Gastrocnemius medialis (tissue), 4 donors: ENCODE measurements at regions of chr1 and their contacts with region 1.

Region 1: DNA sequence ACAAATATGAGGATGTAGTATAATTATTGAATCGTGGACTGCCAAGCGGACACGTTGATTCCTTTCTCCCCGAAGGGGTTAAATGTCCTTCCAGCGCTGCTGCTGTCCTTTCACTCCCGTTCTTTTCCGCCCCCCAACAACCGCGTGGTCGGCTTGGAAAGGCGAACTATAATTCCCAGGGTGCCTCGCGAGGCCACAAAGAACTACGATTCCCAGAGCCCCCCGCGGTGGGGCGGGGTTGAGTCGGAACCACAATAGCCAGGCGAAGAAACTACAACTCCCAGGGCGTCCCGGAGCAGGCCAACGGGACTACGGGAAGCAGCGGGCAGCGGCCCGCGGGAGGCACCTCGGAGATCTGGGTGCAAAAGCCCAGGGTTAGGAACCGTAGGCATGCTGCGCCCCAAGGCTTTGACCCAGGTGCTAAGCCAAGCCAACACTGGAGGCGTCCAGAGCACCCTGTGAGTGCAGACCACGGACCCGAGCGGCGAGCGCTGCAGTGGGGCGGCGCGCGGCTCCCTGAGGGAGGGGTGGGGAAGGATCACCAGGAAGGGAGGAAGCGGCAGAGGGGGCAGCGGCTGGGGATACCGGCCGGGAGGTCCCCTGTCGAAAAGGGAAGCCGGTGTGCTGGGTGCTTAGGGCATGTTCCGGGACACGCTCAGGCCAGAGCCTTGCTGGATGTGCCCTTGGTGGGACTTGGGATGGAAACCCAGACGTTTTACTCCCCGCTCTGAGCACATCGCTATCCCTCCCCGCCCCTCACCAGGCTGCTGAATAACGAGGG is at the start of gene LAMTOR2:
- DNase-seq: peak; percentile 98
- ATAC-seq: peak; percentile 82 to 87
- H3K4me3 ChIP-seq: peak within 1 kb of the TSS; percentile 91 to 95 (median 92)
- H3K27ac ChIP-seq: peak within 1 kb of the TSS; percentile 92 to 99 (median 98)
- H3K4me1 ChIP-seq: peaks cover 17 to 26% of the 10 kb centered on the region in 2 donors
- H3K27me3 ChIP-seq: no peaks in the 10 kb centered on the region
- CTCF ChIP-seq: no peak
- POLR2A ChIP-seq: peak; percentile 69 to 80
- total RNA-seq, gene LAMTOR2: 51.5 to 82.7 (median 72.6) TPM

Region 2: GRCh38 chr1:155859234-155859829 is 195.4 kb before region 1 on chr1 and contains the start of gene SYT11:
- in situ Hi-C with region 1: no loop called
- intact Hi-C with region 1: loop called (anchors 1 kb)
- DNase-seq: peak; percentile 90 to 92
- ATAC-seq: peak; percentile 94 to 98
- H3K4me3 ChIP-seq: peak within 1 kb of the TSS; percentile 60 to 75 (median 62)
- H3K27ac ChIP-seq: peak within 1 kb of the TSS; percentile 84 to 92 (median 89)
- H3K4me1 ChIP-seq: peaks cover 26 to 30% of the 10 kb centered on the region in 2 donors
- H3K27me3 ChIP-seq: no peaks in the 10 kb centered on the region
- CTCF ChIP-seq: no peak
- POLR2A ChIP-seq: peak in 1 of 2 donors; percentile 23
- total RNA-seq, gene SYT11: 2.4 to 5.3 (median 3.1) TPM

Region 3: DNA sequence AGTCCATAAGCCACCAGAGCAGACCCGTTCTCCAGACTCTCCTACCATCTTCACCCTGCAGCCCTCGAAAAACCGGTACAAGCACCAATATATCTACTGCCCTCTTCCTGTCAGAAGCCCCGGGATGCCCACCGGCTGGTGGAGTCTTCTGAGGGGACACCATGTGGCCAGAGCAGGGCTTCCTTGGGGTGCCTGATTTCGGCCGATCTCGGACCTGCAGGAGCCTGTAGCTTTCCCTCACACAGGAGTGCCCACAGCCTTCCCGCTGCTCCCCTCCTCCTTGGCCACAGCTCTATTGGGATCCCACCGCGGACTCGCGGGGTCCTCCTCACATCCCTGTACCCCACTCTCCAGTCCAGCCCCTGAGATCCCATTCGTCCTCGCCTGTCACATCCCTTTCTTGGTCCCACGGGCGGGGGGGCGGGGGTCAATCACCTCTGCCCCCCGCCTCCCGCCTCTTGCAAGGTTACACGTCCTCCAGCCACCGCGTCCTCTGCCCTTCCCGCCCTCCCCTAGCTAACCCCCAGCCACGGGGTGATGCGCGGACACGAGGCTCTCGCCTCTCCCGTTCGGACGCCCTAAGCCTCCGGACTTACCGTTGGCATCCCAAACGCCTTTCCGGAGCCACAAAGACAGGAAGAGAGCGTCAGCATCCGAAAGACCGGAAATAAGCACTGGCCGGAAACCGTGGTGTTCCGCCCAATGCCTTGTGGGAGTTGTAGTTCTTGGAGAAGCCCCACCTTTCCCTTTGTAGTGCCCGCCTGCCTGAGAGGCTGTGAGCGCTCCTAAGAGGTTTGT is 34.2 kb before region 1 on chr1 and contains the start of gene SSR2:
- in situ Hi-C with region 1: no loop called
- intact Hi-C with region 1: loop called (anchors 1 kb)
- DNase-seq: peak; percentile 86 to 87
- ATAC-seq: peak; percentile 100
- H3K4me3 ChIP-seq: peak within 1 kb of the TSS; percentile 72 to 94 (median 91)
- H3K27ac ChIP-seq: peak within 1 kb of the TSS; percentile 86 to 90 (median 88)
- H3K4me1 ChIP-seq: peaks cover 8 to 10% of the 10 kb centered on the region in 2 donors
- H3K27me3 ChIP-seq: no peaks in the 10 kb centered on the region
- CTCF ChIP-seq: no peak
- POLR2A ChIP-seq: peak in 1 of 2 donors; percentile 39
- total RNA-seq, gene SSR2: 70.6 to 118 (median 108) TPM

Region 4: DNA sequence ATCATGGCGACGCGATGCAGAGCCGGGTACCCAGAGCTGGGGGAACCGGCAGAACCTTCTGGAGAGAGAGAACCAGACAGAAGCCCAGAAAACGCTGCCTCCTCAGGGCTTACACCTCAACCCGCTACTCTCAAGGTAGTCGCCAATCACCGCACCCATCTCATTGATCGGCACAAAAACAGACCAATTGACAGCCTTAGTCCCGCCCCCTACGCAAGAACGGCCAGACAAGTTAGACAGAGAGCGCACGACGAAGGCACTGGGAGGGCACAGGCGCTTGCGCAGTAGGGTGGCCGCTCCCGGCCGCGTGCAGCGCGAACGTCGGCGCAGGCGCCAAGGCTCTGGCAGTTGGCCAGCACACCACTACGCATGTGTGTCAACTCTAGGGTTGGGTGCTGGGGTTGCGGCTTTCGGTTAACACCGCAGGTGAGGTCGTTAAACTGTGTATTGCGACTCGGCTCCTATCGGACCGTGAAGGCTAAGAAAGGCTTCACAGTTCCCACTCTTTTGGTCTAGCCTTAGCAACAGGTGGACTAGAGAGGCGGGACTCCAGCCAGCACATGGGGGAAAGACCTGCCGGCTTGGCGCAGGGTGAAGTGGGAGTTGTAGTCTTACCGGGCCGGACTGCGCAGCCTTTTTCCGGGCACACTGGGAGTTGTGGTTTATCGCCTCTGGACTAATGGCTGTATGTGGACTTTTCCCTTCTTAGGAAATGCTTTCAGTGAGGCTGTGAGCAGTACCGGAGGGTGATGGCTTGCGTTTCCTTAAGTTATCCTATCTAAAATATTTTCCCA is 283.7 kb after region 1 on chr1 and contains the starts of genes CCT3 and TSACC:
- in situ Hi-C with region 1: no loop called
- intact Hi-C with region 1: loop called (anchors 1 kb)
- DNase-seq: peak; percentile 98 to 100
- ATAC-seq: peak; percentile 95 to 98
- H3K4me3 ChIP-seq: peak within 1 kb of the TSS; percentile 69 to 91 (median 84)
- H3K27ac ChIP-seq: peak within 1 kb of the TSS; percentile 92 to 97 (median 96)
- H3K4me1 ChIP-seq: peaks cover 12 to 19% of the 10 kb centered on the region in 2 donors
- H3K27me3 ChIP-seq: no peaks in the 10 kb centered on the region
- CTCF ChIP-seq: no peak
- POLR2A ChIP-seq: peak; percentile 72 to 86
- total RNA-seq, gene CCT3: 147 to 189 (median 180) TPM
- total RNA-seq, gene TSACC: not detected

Region 5: DNA sequence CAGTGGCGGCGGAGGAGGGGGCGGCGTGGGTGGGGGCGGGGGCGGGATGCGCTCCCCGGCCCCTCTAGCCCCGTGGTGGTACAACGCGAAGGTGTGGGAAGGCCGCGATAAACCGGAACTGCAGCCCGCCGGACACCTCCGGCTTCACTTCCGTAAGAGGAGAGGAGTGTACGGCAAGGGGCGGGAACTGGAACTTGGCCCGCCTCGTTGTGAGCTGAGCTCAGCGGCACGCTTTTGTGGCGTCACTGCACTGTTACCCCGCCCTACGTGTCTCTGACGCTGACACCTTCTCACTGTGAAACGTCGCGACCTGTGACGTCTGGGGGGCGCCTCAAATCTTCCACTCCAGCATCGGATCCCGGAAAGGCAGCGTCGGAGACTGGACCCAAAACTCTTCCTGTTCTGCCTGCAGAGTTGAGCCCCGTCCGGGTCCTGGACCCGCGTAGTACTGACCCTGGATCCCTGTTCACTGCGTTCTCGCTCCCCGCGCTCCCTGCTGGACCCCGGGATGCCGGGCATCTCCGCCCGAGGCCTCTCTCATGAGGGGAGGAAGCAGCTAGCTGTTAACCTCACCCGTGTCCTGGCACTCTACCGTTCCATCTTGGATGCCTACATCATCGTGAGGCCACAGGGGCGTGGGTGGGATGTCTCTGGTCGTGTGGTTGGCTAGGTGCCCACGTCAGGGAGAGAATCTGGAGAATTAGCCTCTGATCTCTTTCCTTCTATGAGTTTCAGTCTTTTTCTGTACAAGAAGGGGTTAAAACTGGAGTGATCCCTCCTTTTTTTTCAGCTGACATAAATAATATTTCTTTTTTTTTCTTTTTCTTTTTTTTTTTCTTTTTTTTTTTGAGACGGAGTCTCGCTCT is 674.1 kb after region 1 on chr1 and contains the start of gene ISG20L2:
- in situ Hi-C with region 1: loop called in 1 of 4 experiments (anchors 25 kb)
- intact Hi-C with region 1: loop called (anchors 10 kb)
- DNase-seq: peak; percentile 97
- ATAC-seq: peak; percentile 94 to 96
- H3K4me3 ChIP-seq: peak within 1 kb of the TSS; percentile 68 to 94 (median 84)
- H3K27ac ChIP-seq: peak within 1 kb of the TSS; percentile 91 to 98 (median 94)
- H3K4me1 ChIP-seq: peaks cover 35 to 37% of the 10 kb centered on the region in 2 donors
- H3K27me3 ChIP-seq: no peaks in the 10 kb centered on the region
- CTCF ChIP-seq: no peak
- POLR2A ChIP-seq: peak; percentile 14 to 48
- total RNA-seq, gene ISG20L2: 9.5 to 16.4 (median 15.1) TPM